ENCODE measurements at regions of chr3 and their contacts with region 1.

Region 1: GRCh38 chr3:171890398-171890797 is 47.2 kb downstream of the TMEM212 start:
- DNase-seq: no peak
- ATAC-seq: no peak
- H3K4me3 ChIP-seq: no peak overlapping the region
- H3K27ac ChIP-seq: no peak overlapping the region
- H3K4me1 ChIP-seq: no peaks in the 10 kb centered on the region
- H3K27me3 ChIP-seq: peaks cover 5% of the 10 kb centered on the region; the same call in 1 of the 2 replicates
- CTCF ChIP-seq: no peak

Region 2: GRCh38 chr3:171829841-171830517 is 60.4 kb before region 1 on chr3:
- CTCF ChIA-PET with region 1: no interaction called
- POLR2A ChIA-PET with region 1: no interaction called
- intact Hi-C with region 1: no loop called
- DNase-seq: peak; percentile 79
- ATAC-seq: peak; percentile 65
- H3K4me3 ChIP-seq: no peak overlapping the region
- H3K27ac ChIP-seq: peak overlapping the region; percentile 33
- H3K4me1 ChIP-seq: peaks cover 45% of the 10 kb centered on the region
- H3K27me3 ChIP-seq: no peaks in the 10 kb centered on the region
- CTCF ChIP-seq: peak; percentile 89

Region 3: GRCh38 chr3:171851680-171852058 is 38.7 kb before region 1 on chr3:
- CTCF ChIA-PET with region 1: no interaction called
- POLR2A ChIA-PET with region 1: interaction called, 11 read pairs
- intact Hi-C with region 1: no loop called
- DNase-seq: peak; percentile 82
- ATAC-seq: peak; percentile 76
- H3K4me3 ChIP-seq: no peak overlapping the region
- H3K27ac ChIP-seq: peak overlapping the region; percentile 29
- H3K4me1 ChIP-seq: peaks cover 5% of the 10 kb centered on the region; the same call in 1 of the 2 replicates
- H3K27me3 ChIP-seq: no peaks in the 10 kb centered on the region
- CTCF ChIP-seq: no peak

Measured in PC-3 (cell line).